Posterior cingulate gyrus (tissue), 11 donors: ENCODE measurements at regions of chr12 and their contacts with region 1.

Region 1: GRCh38 chr12:123150744-123151456 is at the start of gene PITPNM2:
- DNase-seq: peak in 7 of 10 donors; percentile 30 to 92 (median 63)

Region 2: DNA sequence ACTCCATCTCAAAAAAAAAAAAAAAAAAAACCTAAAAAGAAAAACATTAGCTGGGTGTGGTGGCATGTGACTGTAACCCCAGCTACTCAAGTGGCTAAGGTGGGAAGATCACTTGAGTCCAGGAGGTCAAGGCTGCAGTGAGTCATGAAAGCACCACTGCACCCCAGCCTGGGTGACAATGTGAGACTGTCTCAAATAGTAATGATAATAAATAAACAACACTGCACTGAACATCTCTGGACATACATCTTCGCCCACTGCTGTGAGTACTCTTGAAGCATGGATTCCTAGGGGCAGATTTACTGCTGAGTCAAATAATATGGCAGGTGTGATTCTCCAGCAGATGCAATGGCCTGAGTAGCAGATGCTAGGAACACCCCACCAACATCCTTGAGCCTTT is 208.3 kb before region 1 on chr12:
- intact Hi-C with region 1: no loop called
- DNase-seq: no peak

Region 3: DNA sequence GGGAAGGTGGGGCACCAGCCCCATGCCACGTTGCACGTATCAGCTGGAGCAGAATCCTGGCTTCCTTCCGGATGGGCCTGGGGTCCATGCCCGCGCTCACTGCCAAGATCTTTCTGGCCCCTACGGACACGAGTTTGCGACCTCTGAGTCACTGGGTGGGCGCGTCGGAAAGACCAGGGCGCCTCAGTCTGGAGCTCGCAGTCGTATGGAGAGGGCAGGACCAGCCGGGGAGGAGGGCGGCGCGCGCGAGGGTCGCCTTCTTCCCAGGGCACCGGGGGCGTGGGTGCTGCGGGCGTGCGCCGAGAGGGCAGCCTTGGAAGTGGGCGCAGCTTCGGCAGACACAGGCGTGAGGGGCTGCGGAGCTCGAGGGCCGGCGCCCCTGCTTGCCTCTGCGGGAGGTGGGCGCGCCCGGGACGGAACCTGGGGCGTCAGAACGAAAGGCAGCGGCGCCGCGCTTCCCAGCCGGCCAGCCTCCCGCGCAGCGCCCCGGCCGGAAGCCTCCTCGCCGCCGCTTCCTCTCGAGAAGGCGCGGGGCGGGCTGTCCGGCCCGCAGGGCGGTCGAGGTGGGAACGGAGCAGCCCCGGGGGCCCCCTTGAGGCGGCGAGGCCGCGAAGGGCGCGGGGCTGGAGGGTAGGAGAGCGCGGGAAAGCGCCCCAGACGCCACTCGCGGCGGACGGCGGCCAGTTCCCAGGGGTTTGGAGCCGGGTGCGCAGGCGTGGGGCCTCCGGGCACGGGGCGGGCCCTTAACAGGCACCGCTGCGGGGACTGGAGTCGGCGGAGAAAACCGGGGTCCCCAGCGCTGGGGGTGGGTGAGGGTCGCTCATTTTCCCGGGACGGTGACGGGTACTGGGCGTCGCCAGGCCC is 170.5 kb before region 1 on chr12 and contains the start of gene ARL6IP4:
- intact Hi-C with region 1: loop called (anchors 5 kb)
- DNase-seq: peak; percentile 44 to 94 (median 67)

Region 4: GRCh38 chr12:123043536-123044001 is 107.3 kb before region 1 on chr12:
- intact Hi-C with region 1: loop called (anchors 5 kb)
- DNase-seq: peak; percentile 42 to 96 (median 78)